HepG2 (cell line): ENCODE measurements at regions of chr20 and their contacts with region 1.

Region 1: GRCh38 chr20:44521484-44522481 is at the start of gene SERINC3:
- DNase-seq: peak; percentile 94
- ATAC-seq: peak; percentile 99
- H3K4me3 ChIP-seq: peak within 1 kb of the TSS; percentile 85 to 96 (median 89)
- H3K27ac ChIP-seq: peak within 1 kb of the TSS; percentile 84
- H3K4me1 ChIP-seq: peaks cover 77% of the 10 kb centered on the region
- H3K27me3 ChIP-seq: peaks cover 0 to 7% of the 10 kb centered on the region in 2 experiments; a peak in 1 of 5 replicates
- CTCF ChIP-seq: peak; percentile 6
- EP300 ChIP-seq: no peak; a peak in 2 of 4 replicates
- POLR2A ChIP-seq: peak; percentile 79 to 94
- RAD21 ChIP-seq: peak; percentile 56
- total RNA-seq, gene SERINC3: 53.5 and 82.0 TPM in 2 replicates

Region 2: GRCh38 chr20:44504402-44505315 is 17.1 kb before region 1 on chr20:
- CTCF ChIA-PET with region 1: no interaction called
- POLR2A ChIA-PET with region 1: interaction called, 23 read pairs
- in situ Hi-C with region 1: no loop called
- intact Hi-C with region 1: no loop called
- DNase-seq: peak; percentile 79
- ATAC-seq: peak; percentile 93
- H3K4me3 ChIP-seq: no peak overlapping the region
- H3K27ac ChIP-seq: peak overlapping the region; percentile 48
- H3K4me1 ChIP-seq: peaks cover 23% of the 10 kb centered on the region
- H3K27me3 ChIP-seq: no peaks in the 10 kb centered on the region
- CTCF ChIP-seq: no peak
- EP300 ChIP-seq: no peak
- POLR2A ChIP-seq: no peak
- RAD21 ChIP-seq: no peak

Region 3: DNA sequence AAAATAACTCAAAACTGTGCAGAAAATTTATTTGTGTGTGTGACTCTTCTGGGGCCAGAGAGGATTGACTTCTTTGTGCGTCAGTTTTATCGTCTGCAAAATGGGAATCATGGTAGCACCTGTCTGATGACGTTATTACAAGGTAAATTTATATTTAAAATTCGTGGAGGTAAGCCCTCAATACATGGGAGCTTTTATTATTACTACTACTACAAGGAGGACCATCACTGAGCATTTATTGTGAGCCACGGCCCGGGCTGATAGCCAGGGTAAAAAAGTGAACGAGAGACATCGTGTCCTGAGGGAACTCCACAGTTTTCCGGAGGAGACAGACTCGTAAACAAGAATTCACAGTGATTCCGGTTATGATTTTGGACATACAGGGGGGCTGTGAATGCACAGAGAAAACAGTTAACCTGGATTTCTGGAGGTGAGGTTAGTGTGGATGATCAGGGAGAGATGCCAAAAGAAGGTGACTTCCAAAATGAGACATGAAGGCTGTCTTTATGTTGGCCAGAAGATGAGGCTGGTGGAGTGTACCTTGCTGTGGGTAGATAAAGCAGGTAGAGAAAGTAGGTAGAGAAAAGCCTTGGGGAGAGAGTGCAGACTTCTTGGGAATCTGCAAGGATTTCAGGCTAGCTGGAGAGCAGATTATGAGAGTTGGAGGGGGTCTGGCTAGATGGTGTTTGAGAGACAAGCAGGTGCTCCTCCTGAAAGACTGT is 10.6 kb after region 1 on chr20:
- CTCF ChIA-PET with region 1: no interaction called
- POLR2A ChIA-PET with region 1: interaction called, 24 read pairs
- in situ Hi-C with region 1: no loop called
- intact Hi-C with region 1: no loop called
- DNase-seq: no peak
- ATAC-seq: peak; percentile 10
- H3K4me3 ChIP-seq: peak overlapping the region; percentile 74 to 99 (median 83)
- H3K27ac ChIP-seq: peak overlapping the region; percentile 87
- H3K4me1 ChIP-seq: peaks cover 63% of the 10 kb centered on the region
- H3K27me3 ChIP-seq: no peaks in the 10 kb centered on the region; a peak in 1 of 5 replicates
- CTCF ChIP-seq: no peak
- EP300 ChIP-seq: no peak
- POLR2A ChIP-seq: no peak
- RAD21 ChIP-seq: no peak